ENCODE measurements at regions of chr12 and their contacts with region 1.

Region 1: GRCh38 chr12:104381731-104382480 is 74.8 kb upstream of the CHST11 start:
- DNase-seq: peak; percentile 75
- ATAC-seq: peak; percentile 84

Region 2: DNA sequence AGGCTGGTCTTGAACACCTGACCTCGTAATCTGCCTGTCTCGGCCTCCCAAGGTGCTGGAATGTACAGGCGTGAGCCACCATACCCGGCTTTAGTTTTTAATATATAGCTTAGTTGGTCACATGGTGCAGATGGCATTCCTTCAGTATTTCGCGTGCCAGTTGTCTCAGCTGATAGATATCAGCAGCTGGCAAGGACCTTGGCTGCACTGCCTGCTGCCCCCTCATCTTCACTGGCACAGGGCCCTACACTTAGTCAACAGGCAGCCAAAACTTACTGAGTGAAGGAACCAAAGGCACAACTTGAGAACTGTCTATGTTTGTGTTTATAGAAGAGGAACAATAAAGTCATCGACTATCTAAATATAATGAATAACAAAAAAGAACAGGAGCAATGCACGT is 47.3 kb before region 1 on chr12:
- intact Hi-C with region 1: no loop called
- DNase-seq: no peak
- ATAC-seq: peak; percentile 67

Region 3: DNA sequence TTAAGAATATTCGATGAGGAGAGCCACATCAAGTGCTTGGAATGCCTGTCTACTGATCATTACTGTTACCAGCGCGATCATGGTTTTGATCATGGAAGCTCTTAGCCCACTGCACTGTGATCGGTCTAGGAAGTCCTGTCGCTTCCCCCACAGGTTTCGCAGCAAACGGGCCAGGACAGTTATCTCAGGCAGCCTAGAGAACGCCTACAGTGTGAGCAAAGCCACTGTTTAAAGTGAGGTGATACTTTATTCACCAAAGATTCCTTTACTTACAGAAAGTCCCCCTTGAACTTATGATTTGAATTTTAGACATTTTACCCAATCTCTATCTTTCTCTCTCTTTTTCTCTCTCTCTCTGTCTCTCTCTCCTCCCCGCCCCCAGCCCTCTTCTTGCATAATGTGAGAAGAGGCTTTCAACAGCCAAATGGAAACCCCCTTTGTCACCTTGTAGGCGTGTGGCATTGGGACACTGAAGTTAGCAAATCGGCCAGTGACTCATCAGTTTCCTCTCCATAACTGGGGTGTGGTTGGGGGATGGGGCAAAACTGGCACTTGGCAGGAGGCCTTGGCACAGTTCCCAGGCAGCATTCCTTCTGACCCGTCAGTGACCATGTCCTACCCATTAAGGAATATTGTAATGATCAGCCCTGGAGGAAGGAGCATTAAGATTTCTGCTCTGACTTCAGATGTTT is 289.6 kb after region 1 on chr12:
- intact Hi-C with region 1: loop called (anchors 10 kb)
- DNase-seq: peak; percentile 90
- ATAC-seq: peak; percentile 12

Region 4: DNA sequence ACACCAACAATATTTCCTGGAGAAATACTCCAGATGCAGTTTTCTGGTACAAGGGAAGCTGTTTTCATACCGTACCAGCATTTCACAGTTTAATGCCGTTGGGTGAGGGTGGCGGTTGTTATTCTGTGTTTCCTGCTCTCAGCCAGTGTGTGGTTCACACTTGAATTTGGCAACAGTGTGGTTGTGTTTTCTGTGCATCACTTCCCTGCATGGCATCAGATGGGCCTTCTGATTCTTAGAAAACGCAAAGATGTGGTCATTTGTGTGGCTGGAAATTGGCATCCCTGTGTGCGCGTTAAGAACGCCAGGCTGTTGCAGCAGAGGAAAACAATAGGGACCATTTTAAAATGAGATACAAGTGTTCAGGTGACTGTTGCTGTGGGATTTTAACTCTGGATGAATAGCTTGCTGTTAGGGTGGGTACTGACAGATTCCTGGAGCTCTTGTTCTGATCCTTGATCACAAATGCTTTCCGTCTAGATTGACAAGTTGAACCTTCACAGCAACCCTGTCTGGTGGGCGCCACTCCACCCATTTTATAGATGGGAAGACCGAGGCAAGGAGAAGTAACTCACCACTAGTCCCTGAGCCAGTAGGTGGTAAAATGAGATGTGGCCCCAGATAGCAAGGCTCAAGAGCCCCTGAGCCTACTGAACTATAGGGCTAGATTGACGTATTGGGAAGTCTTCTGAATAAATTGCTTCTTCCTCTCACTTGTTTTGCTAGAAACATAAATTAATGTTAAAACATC is 306.1 kb after region 1 on chr12:
- intact Hi-C with region 1: no loop called
- DNase-seq: no peak
- ATAC-seq: no peak

Region 5: GRCh38 chr12:104699489-104700190 is 317.7 kb after region 1 on chr12:
- intact Hi-C with region 1: loop called (anchors 10 kb)
- DNase-seq: no peak
- ATAC-seq: no peak

Region 6: GRCh38 chr12:104763168-104763805 is 381.4 kb after region 1 on chr12:
- intact Hi-C with region 1: no loop called
- DNase-seq: no peak
- ATAC-seq: no peak

Region 7: GRCh38 chr12:104825408-104825807 is 443.5 kb after region 1 on chr12:
- intact Hi-C with region 1: no loop called
- DNase-seq: no peak
- ATAC-seq: no peak

Region 8: DNA sequence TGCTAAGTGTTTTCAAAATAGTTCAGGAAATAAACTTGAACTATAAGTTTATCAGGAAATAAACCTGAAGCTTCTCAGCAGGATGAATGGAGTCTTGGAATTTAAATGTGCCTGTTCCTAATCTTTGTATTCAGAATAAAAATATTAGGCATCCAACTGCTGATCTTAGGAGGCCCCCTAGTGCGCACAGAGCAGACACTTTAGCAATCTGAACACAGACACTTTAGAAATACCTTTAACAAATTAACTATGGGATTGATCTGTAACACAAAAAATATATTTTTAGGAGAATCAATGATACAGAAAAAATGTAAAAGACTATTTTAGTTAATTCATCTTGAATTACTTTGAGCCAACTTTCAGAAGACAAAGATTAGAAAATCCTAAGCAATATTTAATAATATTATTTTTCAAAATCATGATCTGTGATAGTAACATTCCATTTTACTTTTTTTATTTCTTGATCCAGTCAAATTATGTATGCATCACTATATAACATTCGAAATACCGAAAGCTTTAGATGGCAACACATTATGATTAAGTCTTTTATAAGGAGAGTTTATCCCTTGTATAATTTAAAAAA is 495.3 kb after region 1 on chr12:
- intact Hi-C with region 1: loop called (anchors 1 kb)
- DNase-seq: no peak
- ATAC-seq: peak; percentile 72

Region 9: GRCh38 chr12:105053116-105053572 is 671.2 kb after region 1 on chr12:
- intact Hi-C with region 1: loop called (anchors 5 kb)
- DNase-seq: peak; percentile 77
- ATAC-seq: peak; percentile 59